ENCODE measurements at regions of chr4 and their contacts with region 1.

Region 1: GRCh38 chr4:37686373-37687193 is at the start of gene RELL1:
- DNase-seq: peak; percentile 99
- ATAC-seq: peak; percentile 89
- H3K4me3 ChIP-seq: peak within 1 kb of the TSS; percentile 66 to 69
- H3K27ac ChIP-seq: peak within 1 kb of the TSS; percentile 65
- H3K4me1 ChIP-seq: peaks cover 0 to 24% of the 10 kb centered on the region in 2 experiments; a peak in 3 of 4 replicates
- H3K27me3 ChIP-seq: no peaks in the 10 kb centered on the region
- CTCF ChIP-seq: no peak
- POLR2A ChIP-seq: no peak
- RAD21 ChIP-seq: no peak
- total RNA-seq, gene RELL1: 30.2 TPM

Region 2: DNA sequence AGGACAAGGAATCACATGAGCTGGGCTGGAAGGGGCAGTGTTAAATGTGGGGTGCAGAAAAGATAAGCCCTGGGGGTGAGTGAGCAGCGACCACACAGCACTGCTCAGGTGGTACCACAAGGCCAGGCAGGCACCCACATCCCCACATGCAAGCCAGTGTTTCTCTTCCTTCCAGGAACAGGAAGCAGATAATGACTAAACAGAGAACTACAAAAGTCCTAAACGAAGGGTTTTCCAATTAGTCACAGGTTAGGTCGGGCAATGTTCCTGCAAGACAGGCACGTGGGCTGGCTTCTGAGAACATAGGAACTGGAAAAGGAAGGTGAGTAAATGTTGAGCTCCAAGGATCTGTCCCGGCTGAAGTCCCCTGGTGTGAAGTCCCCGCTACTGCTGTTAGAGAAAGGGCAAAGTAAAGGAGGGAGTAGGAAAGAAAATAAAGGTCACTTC is 19.9 kb before region 1 on chr4:
- CTCF ChIA-PET with region 1: no interaction called
- POLR2A ChIA-PET with region 1: interaction called, 7 read pairs
- RAD21 ChIA-PET with region 1: no interaction called
- intact Hi-C with region 1: loop called (anchors 2 kb)
- DNase-seq: peak; percentile 96
- ATAC-seq: peak; percentile 93
- H3K4me3 ChIP-seq: peak overlapping the region in 1 of 2 experiments; percentile 16; a peak in 2 of 4 replicates
- H3K27ac ChIP-seq: peak overlapping the region; percentile 74
- H3K4me1 ChIP-seq: peaks cover 44 to 74% of the 10 kb centered on the region in 2 experiments
- H3K27me3 ChIP-seq: no peaks in the 10 kb centered on the region
- CTCF ChIP-seq: peak in 2 of 3 experiments; percentile 16 to 39; a peak in 3 of 6 replicates
- POLR2A ChIP-seq: no peak
- RAD21 ChIP-seq: peak; percentile 52

Region 3: DNA sequence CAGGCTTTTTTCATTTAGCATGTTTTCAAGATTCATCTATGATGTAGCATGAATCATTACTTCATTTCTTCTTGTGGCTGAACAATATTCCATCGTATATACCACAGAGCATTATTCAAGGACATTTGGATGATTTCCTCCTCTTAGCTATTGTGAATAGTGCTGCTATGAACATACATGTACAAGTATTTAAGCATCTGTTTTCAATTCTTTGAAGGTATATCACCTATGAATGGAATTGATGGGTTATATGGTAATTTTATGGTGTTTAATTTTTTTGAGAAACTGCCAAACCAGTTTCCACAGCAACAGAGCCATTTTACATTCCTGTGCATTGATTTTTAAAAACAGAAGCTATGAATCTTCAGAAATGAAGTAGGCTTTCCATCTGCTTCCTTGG is 1459.6 kb after region 1 on chr4:
- CTCF ChIA-PET with region 1: no interaction called
- POLR2A ChIA-PET with region 1: no interaction called
- RAD21 ChIA-PET with region 1: interaction called in 1 of 2 experiments, 10 read pairs
- intact Hi-C with region 1: no loop called
- DNase-seq: no peak
- ATAC-seq: no peak
- H3K4me3 ChIP-seq: no peak overlapping the region
- H3K27ac ChIP-seq: no peak overlapping the region
- H3K4me1 ChIP-seq: no peaks in the 10 kb centered on the region
- H3K27me3 ChIP-seq: no peaks in the 10 kb centered on the region
- CTCF ChIP-seq: no peak
- POLR2A ChIP-seq: no peak
- RAD21 ChIP-seq: no peak

Measured in HCT116 (cell line).